ENCODE measurements at regions of chr19 and their contacts with region 1.

Region 1: DNA sequence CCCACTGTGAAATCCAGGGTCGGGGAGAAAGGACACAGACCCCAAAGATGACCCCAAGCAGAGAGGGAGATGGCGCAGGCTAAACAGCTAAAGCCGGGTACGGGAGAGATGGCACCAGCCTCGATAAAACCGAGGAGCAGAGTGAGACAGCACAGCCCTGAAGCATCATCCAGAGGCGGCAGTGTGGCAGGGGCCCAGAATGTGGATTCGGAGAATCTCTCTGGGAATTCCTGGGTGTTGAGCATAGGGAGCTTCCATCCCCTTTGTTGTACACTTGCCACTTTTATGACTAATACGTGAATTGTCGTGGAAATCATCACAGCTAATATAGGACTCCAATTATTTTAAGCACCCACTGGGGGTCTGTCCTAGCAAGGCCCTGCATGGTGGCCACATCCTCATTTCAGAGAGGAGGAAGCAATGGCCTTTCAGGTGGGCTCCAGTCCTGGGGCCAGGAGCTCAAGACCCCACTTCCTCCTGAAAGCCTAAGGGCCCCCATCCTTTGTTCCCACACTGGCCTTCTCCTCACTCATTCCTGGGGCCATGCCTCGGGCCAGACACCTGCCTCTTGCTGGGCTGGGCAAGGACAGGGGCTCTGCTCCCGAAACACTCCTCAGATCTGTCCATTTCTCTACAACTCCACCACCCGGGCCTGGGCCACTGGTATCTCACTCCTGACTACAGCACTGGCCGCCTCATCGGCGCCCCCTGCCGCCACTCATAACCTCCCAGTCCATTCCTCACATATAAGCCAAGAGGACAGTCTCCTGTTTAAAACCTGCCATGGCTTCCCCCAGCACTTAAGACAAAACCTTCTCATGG is 29.3 kb upstream of the ATP1A3 start:
- DNase-seq: peak; percentile 73 to 77
- ATAC-seq: peak; percentile 74 to 91
- H3K4me3 ChIP-seq: no peak overlapping the region
- H3K27ac ChIP-seq: no peak overlapping the region
- H3K4me1 ChIP-seq: peaks cover 6% of the 10 kb centered on the region; the same call in 2 of the 3 replicates
- CTCF ChIP-seq: peak; percentile 72
- EP300 ChIP-seq: no peak
- POLR2A ChIP-seq: no peak
- RAD21 ChIP-seq: peak; percentile 40 to 47; a peak in 3 of 5 replicates

Region 2: DNA sequence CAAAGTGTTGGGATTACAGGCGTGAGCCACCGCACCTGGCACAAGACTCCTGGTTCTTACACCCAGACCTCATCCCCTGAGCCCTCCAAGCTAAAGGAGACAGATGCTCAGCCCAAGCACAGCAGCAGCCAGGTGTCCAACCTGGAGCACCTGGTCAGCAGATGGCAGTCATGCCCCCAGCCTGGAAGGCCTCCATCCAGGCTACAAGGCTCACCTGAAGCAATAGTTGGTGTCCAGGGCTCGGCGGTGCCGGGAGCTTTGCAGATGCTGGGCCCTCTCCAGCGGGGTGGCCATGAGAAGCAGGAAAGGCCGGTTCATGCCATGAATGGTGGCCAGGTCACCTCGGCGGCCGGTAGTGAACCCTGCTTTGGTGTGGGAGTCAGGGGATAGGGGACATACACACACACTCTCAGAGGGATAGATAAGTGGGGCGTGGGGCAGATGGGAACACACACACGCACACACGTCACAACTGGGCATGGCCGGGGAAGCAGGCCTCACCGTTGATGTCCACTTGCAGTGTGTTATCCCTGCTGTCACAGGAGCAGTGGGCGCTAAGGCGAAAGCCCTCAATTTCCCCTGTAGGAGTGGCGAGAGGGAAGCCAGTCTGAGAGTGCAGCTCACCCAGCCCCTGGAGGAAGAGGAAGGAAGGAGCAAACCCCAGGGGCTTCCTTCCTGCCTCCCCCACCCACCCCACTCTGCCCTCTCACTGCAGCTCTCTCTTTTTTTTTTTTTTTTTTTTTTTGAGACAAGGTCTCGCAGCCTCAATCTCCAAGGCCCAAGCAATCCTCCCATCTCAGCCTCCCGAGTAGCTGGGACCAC is 681.5 kb before region 1 on chr19:
- CTCF ChIA-PET with region 1: no interaction called
- POLR2A ChIA-PET with region 1: no interaction called
- DNase-seq: no peak
- ATAC-seq: peak; percentile 12 to 27; a peak in 3 of 6 replicates
- H3K4me3 ChIP-seq: no peak overlapping the region
- H3K27ac ChIP-seq: no peak overlapping the region
- H3K4me1 ChIP-seq: peaks cover 9% of the 10 kb centered on the region
- CTCF ChIP-seq: no peak
- EP300 ChIP-seq: no peak
- POLR2A ChIP-seq: no peak
- RAD21 ChIP-seq: peak in 1 of 2 experiments; percentile 8; a peak in 1 of 5 replicates

Region 3: DNA sequence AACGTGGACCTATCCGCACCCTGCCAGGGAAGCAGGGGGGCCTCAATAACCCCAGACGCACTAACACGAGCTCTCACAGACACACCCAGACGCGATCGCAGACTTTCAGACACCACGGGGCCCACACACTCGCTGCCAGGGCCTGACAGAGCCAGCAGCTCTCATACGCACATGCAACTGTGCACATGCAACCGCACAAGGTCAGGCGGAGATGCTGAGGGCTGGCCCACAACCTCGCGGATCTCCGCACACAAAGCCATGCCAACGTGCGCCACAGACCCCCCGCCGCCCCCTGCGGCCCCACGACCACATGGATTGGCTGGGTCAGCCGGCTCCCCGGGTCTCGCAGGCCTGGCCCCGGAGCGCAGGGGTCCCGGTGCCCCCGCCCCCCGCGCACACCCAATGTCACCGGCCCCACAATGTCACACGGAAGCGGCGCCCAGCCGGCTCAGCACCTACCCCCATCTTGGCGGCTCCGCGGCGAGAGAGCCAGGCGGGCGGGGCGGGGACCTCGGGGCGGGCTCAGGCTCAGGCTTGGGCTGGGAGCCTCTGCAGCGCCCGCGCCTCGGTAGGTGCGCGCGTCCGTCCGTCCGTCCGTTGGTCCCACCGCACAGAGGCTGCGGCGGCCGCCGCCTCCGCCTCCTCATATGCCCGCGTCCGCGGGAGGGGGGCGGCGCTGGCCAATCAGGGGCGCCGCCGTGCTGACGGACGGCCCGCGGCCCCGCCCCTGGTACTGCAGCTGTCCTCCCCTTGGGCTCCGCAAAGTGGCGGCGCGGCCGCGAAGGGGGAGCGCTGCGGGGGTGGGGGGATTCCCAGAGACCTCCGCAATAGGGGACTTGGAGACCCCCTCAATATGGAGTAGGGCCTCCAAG is 29.5 kb before region 1 on chr19 and contains the start of gene ATP1A3:
- CTCF ChIA-PET with region 1: interaction called, 344 read pairs
- POLR2A ChIA-PET with region 1: no interaction called
- DNase-seq: peak; percentile 68 to 99
- ATAC-seq: peak; percentile 43 to 86
- H3K4me3 ChIP-seq: peak within 1 kb of the TSS; percentile 51
- H3K27ac ChIP-seq: peak within 1 kb of the TSS in 1 of 2 experiments; percentile 69; a peak in 3 of 6 replicates
- H3K4me1 ChIP-seq: peaks cover 27% of the 10 kb centered on the region
- CTCF ChIP-seq: no peak
- EP300 ChIP-seq: no peak
- POLR2A ChIP-seq: no peak
- RAD21 ChIP-seq: no peak
- polyA plus RNA-seq, gene ATP1A3: 0.67 and 0.69 TPM in 2 replicates

Region 4: GRCh38 chr19:42010245-42011126 is 12.8 kb before region 1 on chr19:
- CTCF ChIA-PET with region 1: interaction called, 230 read pairs
- POLR2A ChIA-PET with region 1: no interaction called
- DNase-seq: no peak
- ATAC-seq: no peak
- H3K4me3 ChIP-seq: no peak overlapping the region
- H3K27ac ChIP-seq: peak overlapping the region; percentile 66 to 77
- H3K4me1 ChIP-seq: peaks cover 12% of the 10 kb centered on the region
- CTCF ChIP-seq: no peak
- EP300 ChIP-seq: no peak
- POLR2A ChIP-seq: no peak
- RAD21 ChIP-seq: no peak

Region 5: GRCh38 chr19:42038666-42039065 is 15.3 kb after region 1 on chr19:
- CTCF ChIA-PET with region 1: interaction called, 324 read pairs
- POLR2A ChIA-PET with region 1: no interaction called
- DNase-seq: no peak
- ATAC-seq: no peak
- H3K4me3 ChIP-seq: no peak overlapping the region
- H3K27ac ChIP-seq: no peak overlapping the region
- H3K4me1 ChIP-seq: peaks cover 5% of the 10 kb centered on the region; the same call in 1 of the 3 replicates
- CTCF ChIP-seq: no peak
- EP300 ChIP-seq: no peak
- POLR2A ChIP-seq: no peak
- RAD21 ChIP-seq: no peak

Region 6: GRCh38 chr19:42098781-42099180 is 75.4 kb after region 1 on chr19:
- CTCF ChIA-PET with region 1: no interaction called
- POLR2A ChIA-PET with region 1: no interaction called
- DNase-seq: no peak
- ATAC-seq: no peak
- H3K4me3 ChIP-seq: no peak overlapping the region
- H3K27ac ChIP-seq: no peak overlapping the region
- H3K4me1 ChIP-seq: no peaks in the 10 kb centered on the region
- CTCF ChIP-seq: no peak
- EP300 ChIP-seq: no peak
- POLR2A ChIP-seq: no peak
- RAD21 ChIP-seq: no peak